ENCODE measurements at regions of chr10 and their contacts with region 1.

Region 1: GRCh38 chr10:127243490-127244272 is 47.3 kb upstream of the INSYN2A start:
- DNase-seq: peak; percentile 11
- H3K4me3 Mint-ChIP-seq: no peak overlapping the region
- H3K27ac Mint-ChIP-seq: no peak overlapping the region
- H3K4me1 Mint-ChIP-seq: no peaks in the 10 kb centered on the region
- H3K27me3 Mint-ChIP-seq: peaks cover 4% of the 10 kb centered on the region

Region 2: DNA sequence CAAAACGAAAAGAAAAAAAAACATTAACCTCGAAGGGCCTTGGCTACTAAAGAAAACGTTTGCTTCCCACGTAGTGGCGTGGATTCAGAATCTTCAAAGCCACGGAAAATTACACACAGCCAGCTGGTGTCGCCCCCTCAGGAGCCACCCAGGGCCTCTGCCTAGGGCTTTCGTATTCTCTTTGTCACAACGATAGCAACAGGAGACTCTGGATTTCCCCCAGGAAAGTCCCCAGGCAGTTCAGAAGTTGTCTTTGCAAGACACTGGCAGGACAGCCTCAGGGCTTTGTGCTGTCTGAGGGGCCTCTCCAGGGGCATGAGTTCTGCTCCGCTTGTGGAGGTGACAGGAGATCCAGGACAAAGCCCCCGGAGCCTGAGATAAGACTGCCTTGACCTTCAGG is 102.9 kb after region 1 on chr10:
- intact Hi-C with region 1: loop called (anchors 10 kb)
- DNase-seq: peak; percentile 1
- H3K4me3 Mint-ChIP-seq: no peak overlapping the region
- H3K27ac Mint-ChIP-seq: no peak overlapping the region
- H3K4me1 Mint-ChIP-seq: peaks cover 7% of the 10 kb centered on the region
- H3K27me3 Mint-ChIP-seq: peaks cover 4% of the 10 kb centered on the region

Measured in activated T-helper 1 cell treated with anti-CD3 and anti-CD28 coated beads, Interleukin-12 subunit alpha, Interleukin-12 subunit beta, Interleukin-2, Interleukin-4 antibody, amounts not matched to agents 30 ng/mL and 10 ng/mL and 1 ng/mL, durations not matched to agents 14 hours and 24 hours and 36 hours (primary cell).